Naive thymus-derived CD4-positive, alpha-beta T cell (primary cell): ENCODE measurements at regions of chr16 and their contacts with region 1.

Region 1: DNA sequence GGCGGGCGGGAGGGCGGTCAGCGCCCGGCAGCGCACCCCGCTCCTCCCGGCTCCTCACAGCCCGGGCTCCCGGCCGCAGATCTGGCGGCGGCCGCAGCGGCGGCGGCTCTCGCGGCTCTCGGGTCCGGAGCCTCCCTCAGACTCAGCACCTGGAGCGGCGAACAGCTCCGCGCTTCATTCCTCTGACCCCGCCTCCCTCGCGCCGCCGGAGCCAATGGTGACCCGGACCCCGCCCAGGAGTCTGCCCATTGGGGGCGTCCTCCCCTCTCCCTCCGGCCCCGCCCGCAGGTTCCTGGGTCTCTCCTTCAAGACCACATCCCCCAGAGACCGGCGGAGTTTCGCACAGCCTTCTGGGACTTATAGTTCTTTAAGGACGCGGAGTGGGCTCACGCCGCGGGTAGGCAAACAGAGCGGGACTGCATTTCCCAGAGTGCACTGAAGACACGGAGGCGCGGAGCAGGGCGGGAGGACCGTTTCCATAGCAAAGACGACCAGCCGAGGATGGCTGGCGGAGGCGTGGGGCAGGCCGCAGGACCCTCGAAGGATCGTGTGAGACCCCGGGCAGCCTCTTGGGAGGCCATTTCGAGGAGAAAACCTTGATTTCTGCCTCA is at the start of gene SMPD3:
- DNase-seq: peak; percentile 95 to 99 (median 97)
- ATAC-seq: peak; percentile 99
- H3K4me3 ChIP-seq: peak within 1 kb of the TSS; percentile 63
- H3K4me3 Mint-ChIP-seq: peak within 1 kb of the TSS; percentile 74 to 93 (median 76)
- H3K27ac ChIP-seq: no peak within 1 kb of the TSS
- H3K27ac Mint-ChIP-seq: peak within 1 kb of the TSS in 8 of 9 donors; percentile 2 to 80 (median 38)
- H3K4me1 ChIP-seq: peaks cover 21 to 28% of the 10 kb centered on the region in 2 donors
- H3K4me1 Mint-ChIP-seq: peaks cover 16 to 27% (median 22%) of the 10 kb centered on the region in 7 donors
- H3K27me3 ChIP-seq: peaks cover 14% of the 10 kb centered on the region in 2 donors
- H3K27me3 Mint-ChIP-seq: peaks cover 12 to 56% (median 23%) of the 10 kb centered on the region in 5 donors
- total RNA-seq, gene SMPD3: 0.57 to 6.1 (median 1.8) TPM

Region 2: DNA sequence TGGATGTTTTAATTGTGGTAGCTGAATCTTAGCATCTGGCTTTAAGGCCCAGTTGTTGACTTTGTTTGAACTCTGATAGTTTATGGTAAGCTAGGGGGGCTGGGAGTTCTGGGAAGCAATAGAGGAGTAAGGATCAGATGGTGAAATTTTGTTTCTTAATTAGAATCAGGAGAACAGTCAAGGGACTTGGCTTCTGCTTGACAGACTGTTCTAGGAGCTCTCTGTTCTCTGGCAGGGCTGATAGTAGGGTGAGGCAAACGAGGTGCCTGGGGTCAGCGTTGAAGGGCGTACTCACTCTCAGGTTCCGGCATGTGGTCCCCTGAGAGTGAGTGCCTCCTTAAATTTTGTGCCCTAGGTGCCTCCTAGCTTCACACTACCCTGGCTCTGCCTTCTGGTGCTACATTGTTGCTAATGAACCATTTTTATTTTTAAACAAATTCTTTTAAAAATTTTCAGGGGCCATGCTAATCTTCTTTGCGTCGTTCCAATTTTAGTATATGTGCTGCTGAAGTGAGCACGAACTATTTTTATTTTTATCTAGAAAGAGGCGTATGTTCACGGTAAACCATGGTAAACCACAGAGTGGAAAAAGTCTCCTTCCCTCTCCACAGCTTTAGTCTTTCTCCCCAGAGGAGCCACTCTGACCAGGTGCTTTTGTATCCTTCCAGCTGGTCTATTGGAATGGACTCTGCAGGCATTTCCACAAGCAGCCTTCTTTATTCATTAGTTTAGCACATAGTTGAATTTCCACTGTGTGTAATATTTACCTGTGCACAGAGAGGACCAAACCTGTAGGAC is 164.5 kb before region 1 on chr16:
- CTCF ChIA-PET with region 1: no interaction called
- POLR2A ChIA-PET with region 1: no interaction called
- intact Hi-C with region 1: loop called in 1 of 2 experiments (anchors 1 kb)
- DNase-seq: no peak
- ATAC-seq: no peak
- H3K4me3 ChIP-seq: peak overlapping the region; percentile 62
- H3K4me3 Mint-ChIP-seq: peak overlapping the region; percentile 78 to 93 (median 84)
- H3K27ac ChIP-seq: peak overlapping the region; percentile 68
- H3K27ac Mint-ChIP-seq: peak overlapping the region; percentile 84 to 92 (median 91)
- H3K4me1 ChIP-seq: peaks cover 71 to 97% of the 10 kb centered on the region in 2 donors
- H3K4me1 Mint-ChIP-seq: peaks cover 80 to 97% (median 89%) of the 10 kb centered on the region in 7 donors
- H3K27me3 ChIP-seq: no peaks in the 10 kb centered on the region
- H3K27me3 Mint-ChIP-seq: no peaks in the 10 kb centered on the region

Region 3: DNA sequence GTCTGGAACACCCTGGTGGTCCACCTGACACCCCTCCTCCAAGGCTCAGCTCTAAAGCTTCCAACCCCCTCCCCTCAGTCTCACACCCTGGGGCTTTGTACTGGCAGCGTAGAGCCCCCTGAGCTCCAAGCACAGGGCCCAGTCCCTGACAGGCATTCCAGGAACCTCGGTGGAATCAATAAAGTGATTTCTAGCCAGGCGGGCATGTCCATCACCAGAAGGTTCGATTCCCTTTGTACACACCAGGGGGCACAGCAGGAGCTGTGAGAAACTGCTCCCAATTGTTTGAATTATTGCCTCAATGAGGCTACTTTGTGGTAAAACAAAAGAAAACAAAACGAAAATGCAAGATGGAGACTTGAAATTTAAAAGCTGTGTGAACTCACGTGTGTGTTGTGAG is 52.0 kb before region 1 on chr16:
- CTCF ChIA-PET with region 1: interaction called, 4 read pairs
- POLR2A ChIA-PET with region 1: interaction called, 4 read pairs
- intact Hi-C with region 1: loop called (anchors 1 kb)
- DNase-seq: peak in 7 of 9 donors; percentile 52 to 76 (median 69)
- ATAC-seq: peak; percentile 84
- H3K4me3 ChIP-seq: no peak overlapping the region
- H3K4me3 Mint-ChIP-seq: no peak overlapping the region
- H3K27ac ChIP-seq: no peak overlapping the region
- H3K27ac Mint-ChIP-seq: peak overlapping the region in 8 of 9 donors; percentile 8 to 57 (median 43)
- H3K4me1 ChIP-seq: peaks cover 11 to 14% of the 10 kb centered on the region in 2 donors
- H3K4me1 Mint-ChIP-seq: peaks cover 8 to 29% (median 23%) of the 10 kb centered on the region in 7 donors
- H3K27me3 ChIP-seq: no peaks in the 10 kb centered on the region
- H3K27me3 Mint-ChIP-seq: peaks cover 0 to 32% (median 0%) of the 10 kb centered on the region in 5 donors

Region 4: GRCh38 chr16:68470461-68471150 is 22.1 kb after region 1 on chr16:
- CTCF ChIA-PET with region 1: interaction called, 3 read pairs
- POLR2A ChIA-PET with region 1: interaction called, 5 read pairs
- intact Hi-C with region 1: loop called (anchors 1 to 2 kb)
- DNase-seq: no peak
- ATAC-seq: peak; percentile 91
- H3K4me3 ChIP-seq: peak overlapping the region; percentile 68
- H3K4me3 Mint-ChIP-seq: peak overlapping the region; percentile 78 to 92 (median 86)
- H3K27ac ChIP-seq: peak overlapping the region; percentile 48
- H3K27ac Mint-ChIP-seq: peak overlapping the region; percentile 73 to 95 (median 87)
- H3K4me1 ChIP-seq: peaks cover 21 to 38% of the 10 kb centered on the region in 2 donors
- H3K4me1 Mint-ChIP-seq: peaks cover 38 to 53% (median 49%) of the 10 kb centered on the region in 7 donors
- H3K27me3 ChIP-seq: no peaks in the 10 kb centered on the region
- H3K27me3 Mint-ChIP-seq: peaks cover 0 to 15% (median 0%) of the 10 kb centered on the region in 5 donors

Region 5: GRCh38 chr16:68486502-68487202 is 38.2 kb after region 1 on chr16:
- CTCF ChIA-PET with region 1: no interaction called
- POLR2A ChIA-PET with region 1: no interaction called
- intact Hi-C with region 1: no loop called
- DNase-seq: no peak
- ATAC-seq: no peak
- H3K4me3 ChIP-seq: no peak overlapping the region
- H3K4me3 Mint-ChIP-seq: no peak overlapping the region
- H3K27ac ChIP-seq: no peak overlapping the region
- H3K27ac Mint-ChIP-seq: peak overlapping the region in 1 of 9 donors; percentile 40
- H3K4me1 ChIP-seq: no peaks in the 10 kb centered on the region
- H3K4me1 Mint-ChIP-seq: peaks cover 0 to 5% (median 3%) of the 10 kb centered on the region in 7 donors
- H3K27me3 ChIP-seq: no peaks in the 10 kb centered on the region
- H3K27me3 Mint-ChIP-seq: peaks cover 0 to 14% (median 0%) of the 10 kb centered on the region in 5 donors

Region 6: GRCh38 chr16:68646953-68647659 is 198.6 kb after region 1 on chr16:
- CTCF ChIA-PET with region 1: no interaction called
- POLR2A ChIA-PET with region 1: no interaction called
- intact Hi-C with region 1: no loop called
- DNase-seq: no peak
- ATAC-seq: no peak
- H3K4me3 ChIP-seq: no peak overlapping the region
- H3K4me3 Mint-ChIP-seq: peak overlapping the region in 3 of 10 donors; percentile 51 to 71 (median 54)
- H3K27ac ChIP-seq: no peak overlapping the region
- H3K27ac Mint-ChIP-seq: no peak overlapping the region
- H3K4me1 ChIP-seq: peaks cover 7 to 16% of the 10 kb centered on the region in 2 donors
- H3K4me1 Mint-ChIP-seq: peaks cover 6 to 18% (median 14%) of the 10 kb centered on the region in 7 donors
- H3K27me3 ChIP-seq: peaks cover 0 to 18% of the 10 kb centered on the region in 2 donors
- H3K27me3 Mint-ChIP-seq: peaks cover 51 to 68% (median 56%) of the 10 kb centered on the region in 5 donors

Region 7: GRCh38 chr16:69132424-69133252 is 684.2 kb after region 1 on chr16 and contains the starts of genes CHTF8 and UTP4:
- CTCF ChIA-PET with region 1: no interaction called
- POLR2A ChIA-PET with region 1: no interaction called
- intact Hi-C with region 1: loop called in 1 of 2 experiments (anchors 1 kb)
- DNase-seq: peak; percentile 81 to 91 (median 87)
- ATAC-seq: peak; percentile 95
- H3K4me3 ChIP-seq: peak within 1 kb of the TSS; percentile 80
- H3K4me3 Mint-ChIP-seq: peak within 1 kb of the TSS; percentile 91 to 97 (median 94)
- H3K27ac ChIP-seq: peak within 1 kb of the TSS; percentile 88
- H3K27ac Mint-ChIP-seq: peak within 1 kb of the TSS; percentile 85 to 97 (median 95)
- H3K4me1 ChIP-seq: peaks cover 12 to 23% of the 10 kb centered on the region in 2 donors
- H3K4me1 Mint-ChIP-seq: peaks cover 16 to 71% (median 61%) of the 10 kb centered on the region in 7 donors
- H3K27me3 ChIP-seq: no peaks in the 10 kb centered on the region
- H3K27me3 Mint-ChIP-seq: no peaks in the 10 kb centered on the region
- total RNA-seq, gene CHTF8: 53.3 to 142 (median 133) TPM
- total RNA-seq, gene UTP4: 31.9 to 56.5 (median 35.1) TPM